AG04449 (cell line): ENCODE measurements at regions of chr15 and their contacts with region 1.

Region 1: DNA sequence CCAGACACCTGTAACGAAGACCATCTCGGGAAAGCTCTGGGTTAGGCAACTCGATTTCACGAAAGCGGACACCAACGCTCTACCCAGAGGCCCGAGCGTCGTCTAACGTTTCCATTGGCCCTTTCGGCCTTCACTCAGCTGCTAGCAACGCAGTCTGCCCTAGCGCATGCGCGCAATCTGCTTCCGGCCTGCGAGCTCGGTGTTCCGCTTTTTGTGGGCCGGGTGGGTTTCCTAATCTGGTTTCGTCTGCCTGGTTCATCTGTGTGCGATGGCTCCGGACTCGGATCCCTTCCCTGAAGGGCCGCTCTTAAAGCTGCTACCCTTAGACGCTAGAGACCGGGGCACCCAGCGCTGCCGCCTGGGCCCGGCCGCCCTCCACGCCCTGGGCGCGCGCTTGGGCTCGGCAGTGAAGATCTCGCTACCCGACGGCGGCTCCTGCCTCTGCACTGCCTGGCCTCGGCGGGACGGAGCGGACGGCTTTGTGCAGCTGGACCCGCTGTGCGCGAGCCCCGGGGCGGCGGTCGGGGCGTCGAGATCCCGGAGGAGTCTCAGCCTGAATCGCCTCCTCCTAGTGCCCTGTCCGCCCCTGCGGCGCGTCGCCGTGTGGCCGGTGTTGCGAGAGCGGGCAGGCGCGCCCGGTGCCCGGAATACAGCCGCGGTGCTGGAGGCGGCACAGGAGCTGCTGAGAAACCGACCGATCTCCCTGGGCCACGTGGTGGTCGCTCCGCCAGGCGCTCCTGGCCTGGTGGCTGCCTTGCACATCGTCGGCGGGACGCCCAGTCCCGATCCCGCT is 24.0 kb upstream of the GATM start:
- DNase-seq: peak; percentile 93
- H3K4me3 ChIP-seq: peak overlapping the region; percentile 82
- CTCF ChIP-seq: no peak

Region 2: GRCh38 chr15:45198337-45199135 is 203.8 kb before region 1 on chr15:
- CTCF ChIA-PET with region 1: interaction called, 107 read pairs
- POLR2A ChIA-PET with region 1: interaction called, 3 read pairs
- DNase-seq: peak; percentile 87
- H3K4me3 ChIP-seq: peak overlapping the region; percentile 92
- CTCF ChIP-seq: peak; percentile 87

Region 3: GRCh38 chr15:45279024-45279698 is 123.2 kb before region 1 on chr15:
- CTCF ChIA-PET with region 1: interaction called, 3 read pairs
- POLR2A ChIA-PET with region 1: interaction called, 10 read pairs
- DNase-seq: peak; percentile 80
- H3K4me3 ChIP-seq: peak overlapping the region; percentile 89
- CTCF ChIP-seq: no peak

Region 4: GRCh38 chr15:45391746-45392583 is 10.4 kb before region 1 on chr15:
- CTCF ChIA-PET with region 1: interaction called, 21 read pairs
- POLR2A ChIA-PET with region 1: no interaction called
- DNase-seq: no peak
- H3K4me3 ChIP-seq: no peak overlapping the region
- CTCF ChIP-seq: no peak